ENCODE measurements at regions of chr16 and their contacts with region 1.

Region 1: GRCh38 chr16:50326949-50327402 is 41.8 kb downstream of the BRD7 start:
- DNase-seq: peak; percentile 86
- ATAC-seq: peak; percentile 95
- H3K4me3 Mint-ChIP-seq: no peak overlapping the region
- H3K27ac Mint-ChIP-seq: peak overlapping the region; percentile 73
- H3K4me1 Mint-ChIP-seq: peaks cover 51% of the 10 kb centered on the region
- H3K27me3 Mint-ChIP-seq: no peaks in the 10 kb centered on the region
- CTCF ChIP-seq: peak; percentile 65

Region 2: DNA sequence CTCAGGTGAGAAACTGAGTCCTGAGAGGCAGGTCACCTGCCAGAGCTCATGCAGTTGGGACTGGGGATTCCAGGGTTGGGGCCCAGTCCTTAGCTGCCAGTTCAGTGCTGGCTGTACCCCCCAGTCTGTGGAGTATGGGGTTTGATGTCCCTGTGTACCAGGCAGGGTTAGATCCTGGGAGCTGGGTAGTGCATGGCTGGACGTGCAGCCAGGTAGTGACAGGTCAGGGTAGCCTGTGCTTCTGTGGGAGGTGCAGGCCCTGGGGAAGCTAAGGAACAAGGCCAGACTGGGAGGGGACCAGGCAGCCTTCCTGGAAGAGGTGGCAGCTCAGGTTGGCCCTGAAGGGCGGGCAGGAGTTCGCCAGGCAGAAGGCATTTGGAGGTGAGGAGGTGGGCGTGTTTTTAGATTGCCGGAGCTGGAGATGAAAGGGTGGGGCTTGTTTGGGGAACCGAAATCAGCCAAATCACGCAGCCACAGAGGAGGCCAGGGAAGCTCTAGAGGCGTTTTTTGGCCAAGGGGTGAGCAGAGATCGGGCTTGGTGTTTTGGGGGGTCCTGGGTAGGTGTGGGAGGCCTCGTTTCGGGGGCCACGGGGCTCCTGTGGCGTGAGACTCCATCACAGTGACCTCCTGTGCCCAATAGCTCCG is 53.2 kb before region 1 on chr16:
- CTCF ChIA-PET with region 1: interaction called, 24 read pairs
- POLR2A ChIA-PET with region 1: interaction called, 4 read pairs
- intact Hi-C with region 1: no loop called
- DNase-seq: peak; percentile 68
- ATAC-seq: peak; percentile 28
- H3K4me3 Mint-ChIP-seq: peak overlapping the region; percentile 93
- H3K27ac Mint-ChIP-seq: peak overlapping the region; percentile 100
- H3K4me1 Mint-ChIP-seq: peaks cover 94% of the 10 kb centered on the region
- H3K27me3 Mint-ChIP-seq: no peaks in the 10 kb centered on the region
- CTCF ChIP-seq: no peak

Region 3: DNA sequence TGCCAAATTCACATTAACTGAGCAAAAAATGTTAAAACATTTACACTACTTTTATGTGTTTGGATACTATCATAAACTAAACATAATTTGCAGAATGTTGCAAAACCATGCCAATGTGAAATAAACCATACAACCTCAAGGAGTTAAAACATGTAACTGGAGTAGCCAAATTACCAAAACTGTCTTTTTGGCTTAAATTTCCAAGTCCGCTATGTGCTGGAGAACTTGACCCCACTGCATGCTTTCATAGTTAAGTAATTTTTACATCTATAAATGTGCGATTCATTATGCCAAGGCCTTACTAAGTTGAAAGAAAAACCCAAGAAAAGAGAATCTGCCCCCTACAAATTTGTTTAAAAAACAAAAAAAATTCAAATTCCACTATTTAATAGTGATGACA is 13.6 kb after region 1 on chr16:
- CTCF ChIA-PET with region 1: interaction called, 30 read pairs
- POLR2A ChIA-PET with region 1: interaction called, 13 read pairs
- intact Hi-C with region 1: no loop called
- DNase-seq: no peak
- ATAC-seq: no peak
- H3K4me3 Mint-ChIP-seq: no peak overlapping the region
- H3K27ac Mint-ChIP-seq: no peak overlapping the region
- H3K4me1 Mint-ChIP-seq: peaks cover 38% of the 10 kb centered on the region
- H3K27me3 Mint-ChIP-seq: no peaks in the 10 kb centered on the region
- CTCF ChIP-seq: no peak

Region 4: DNA sequence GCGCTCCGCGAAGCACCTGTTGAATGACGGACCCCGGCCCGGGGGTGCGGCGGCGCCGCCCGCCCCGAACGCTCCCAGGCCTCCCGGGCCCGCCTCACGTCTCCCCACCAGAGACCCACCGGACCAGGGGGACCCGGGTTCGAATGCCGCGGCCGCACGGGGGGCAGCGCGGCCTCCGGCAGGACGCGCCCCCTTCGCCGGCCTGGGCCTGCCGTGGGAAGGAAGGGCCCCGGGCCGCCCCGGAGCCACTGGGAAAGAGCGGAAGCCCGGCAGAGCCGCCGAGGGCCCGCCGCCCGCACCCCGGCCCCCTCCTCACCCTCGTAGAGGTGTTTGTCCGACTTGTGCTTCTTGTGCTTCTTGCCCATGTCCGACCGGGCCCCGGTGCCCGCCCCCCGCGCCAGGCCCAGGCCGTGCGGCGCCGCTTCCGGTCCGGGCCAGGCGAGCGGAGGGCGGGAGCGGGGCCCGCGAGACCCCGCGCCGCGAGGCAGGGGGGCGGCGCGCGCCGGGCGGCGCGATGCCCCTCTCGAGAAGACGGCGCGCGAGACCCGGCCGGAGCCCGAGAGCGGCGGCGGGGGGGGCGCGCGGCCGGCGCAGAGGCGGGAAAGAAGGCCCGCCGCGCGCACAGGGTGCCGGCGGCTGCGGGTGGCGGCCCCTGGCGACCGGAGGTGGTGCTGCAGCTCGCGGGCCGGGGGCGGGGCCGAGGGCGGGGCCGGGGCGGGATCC is 41.6 kb after region 1 on chr16 and contains the start of gene BRD7:
- CTCF ChIA-PET with region 1: interaction called, 266 read pairs
- POLR2A ChIA-PET with region 1: interaction called, 6 read pairs
- intact Hi-C with region 1: no loop called
- DNase-seq: peak; percentile 65
- ATAC-seq: peak; percentile 91
- H3K4me3 Mint-ChIP-seq: peak within 1 kb of the TSS; percentile 93
- H3K27ac Mint-ChIP-seq: peak within 1 kb of the TSS; percentile 92
- H3K4me1 Mint-ChIP-seq: peaks cover 36% of the 10 kb centered on the region
- H3K27me3 Mint-ChIP-seq: no peaks in the 10 kb centered on the region
- CTCF ChIP-seq: no peak
- total RNA-seq, gene BRD7: 76.2 to 93.4 TPM

Region 5: DNA sequence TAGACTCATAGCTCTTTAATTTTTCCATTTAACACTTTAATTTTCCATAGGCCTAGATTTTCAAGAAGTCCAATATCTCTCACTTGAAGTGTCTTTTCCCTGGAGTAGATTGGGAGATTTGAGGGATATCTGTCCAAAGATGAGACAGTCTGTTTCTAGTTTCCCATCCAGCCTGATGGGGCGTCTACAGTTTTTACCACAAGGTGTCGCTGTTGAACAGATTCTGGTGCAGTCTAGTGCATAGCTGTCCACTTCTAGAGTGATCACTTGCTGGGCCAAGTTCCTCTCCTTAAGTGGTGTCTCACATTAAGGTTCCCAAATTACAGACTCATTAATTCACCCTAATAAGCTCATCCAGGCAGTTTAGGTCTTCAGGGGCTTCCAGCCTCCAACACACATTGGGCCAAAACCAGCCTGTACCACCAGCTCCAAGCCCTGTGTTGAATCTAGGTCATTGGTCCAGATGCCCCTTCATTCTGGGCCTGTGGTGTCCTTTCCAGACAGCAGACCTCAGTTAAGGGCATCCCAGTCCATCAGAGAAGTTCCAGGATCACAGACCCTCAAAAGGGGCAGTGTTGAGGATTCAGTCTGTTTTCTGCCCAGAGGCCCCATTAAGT is 344.8 kb after region 1 on chr16:
- CTCF ChIA-PET with region 1: interaction called, 41 read pairs
- POLR2A ChIA-PET with region 1: no interaction called
- intact Hi-C with region 1: no loop called
- DNase-seq: peak; percentile 77
- ATAC-seq: peak; percentile 26
- H3K4me3 Mint-ChIP-seq: no peak overlapping the region
- H3K27ac Mint-ChIP-seq: peak overlapping the region; percentile 61
- H3K4me1 Mint-ChIP-seq: peaks cover 23% of the 10 kb centered on the region
- H3K27me3 Mint-ChIP-seq: no peaks in the 10 kb centered on the region
- CTCF ChIP-seq: peak; percentile 92